HEK293 (cell line): ENCODE measurements at regions of chr9 and their contacts with region 1.

Region 1: DNA sequence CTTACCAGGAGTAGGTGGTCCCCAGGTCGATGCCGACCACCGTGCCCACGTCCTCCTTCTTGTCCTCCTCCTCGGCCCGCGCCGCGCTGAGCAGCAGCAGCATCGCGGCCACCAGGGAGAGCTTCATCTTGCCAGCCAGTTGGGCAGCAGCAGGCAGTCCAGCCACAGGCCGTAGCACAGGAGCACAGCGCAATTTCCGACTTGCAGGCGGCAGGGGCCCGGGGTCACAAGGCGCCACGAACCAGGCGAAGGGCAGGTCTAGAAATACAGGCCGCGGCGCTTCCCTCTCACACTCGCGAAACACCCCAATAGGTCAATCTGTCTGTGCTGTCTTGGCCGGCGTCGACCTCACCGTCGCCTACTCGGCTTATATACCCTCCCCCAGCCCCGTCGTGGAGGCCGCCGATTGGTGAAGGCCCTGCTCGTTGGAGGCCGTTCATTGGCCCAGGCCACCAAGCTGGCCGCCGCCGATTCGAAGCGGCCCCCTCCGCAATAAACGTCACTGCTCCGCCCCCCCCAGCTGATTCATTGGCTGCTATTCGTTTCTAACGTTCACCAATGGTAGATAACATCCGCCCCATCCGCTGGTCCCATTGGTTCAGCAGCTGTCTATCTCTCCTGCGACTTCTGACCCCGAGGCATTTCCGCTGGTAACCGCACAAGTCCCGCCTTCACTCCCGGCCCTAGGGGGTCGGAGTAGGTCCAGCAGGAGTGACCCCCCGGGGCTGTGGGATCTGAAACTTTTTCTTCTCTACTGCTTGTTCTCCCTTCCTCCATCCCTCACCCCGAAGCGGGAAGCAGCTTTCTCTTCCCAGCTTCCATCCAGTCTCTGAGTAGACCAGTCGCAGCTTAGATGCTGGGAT is at the start of gene HSPA5:
- H3K4me3 ChIP-seq: peak within 1 kb of the TSS; percentile 66
- H3K27ac ChIP-seq: peak within 1 kb of the TSS; percentile 81
- H3K4me1 ChIP-seq: no peaks in the 10 kb centered on the region
- CTCF ChIP-seq: peak; percentile 74; the same call in 1 of the 2 replicates

Region 2: DNA sequence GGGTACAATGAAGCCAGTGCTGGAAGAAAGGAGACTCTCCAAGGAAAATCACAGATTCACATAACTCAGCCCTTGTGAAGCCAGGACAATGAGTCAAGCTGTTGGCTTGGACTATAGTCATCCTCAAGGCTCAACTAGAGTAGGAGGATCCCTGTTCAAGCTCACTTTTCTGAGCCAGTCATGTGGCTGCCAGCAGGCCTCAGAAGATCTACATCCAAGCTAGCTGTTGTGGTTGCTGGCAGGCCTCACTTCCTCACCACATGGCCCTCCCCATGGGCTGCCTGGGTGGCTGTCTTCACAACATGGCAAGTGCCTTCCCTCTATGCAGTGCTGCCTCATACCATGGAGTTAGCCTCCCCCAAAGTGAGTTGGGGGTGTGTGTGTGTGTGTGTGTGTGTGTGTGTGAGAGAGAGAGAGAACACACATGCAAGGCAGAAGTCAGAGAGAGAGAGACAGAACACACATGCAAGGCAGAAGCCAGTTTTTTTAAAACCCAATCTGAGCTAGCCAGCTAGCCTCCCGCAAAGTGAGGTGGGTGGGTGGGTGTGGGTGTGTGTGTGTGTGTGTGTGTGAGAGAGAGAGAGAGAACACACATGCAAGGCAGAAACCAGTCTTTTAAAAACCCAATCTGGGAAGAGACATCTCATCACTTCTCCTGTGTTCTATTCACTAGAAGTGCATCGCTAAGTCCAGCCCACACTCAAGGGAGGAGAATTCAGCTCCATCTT is 115.0 kb before region 1 on chr9:
- CTCF ChIA-PET with region 1: no interaction called
- POLR2A ChIA-PET with region 1: no interaction called
- H3K4me3 ChIP-seq: no peak overlapping the region
- H3K27ac ChIP-seq: no peak overlapping the region
- H3K4me1 ChIP-seq: no peaks in the 10 kb centered on the region
- CTCF ChIP-seq: no peak

Region 3: DNA sequence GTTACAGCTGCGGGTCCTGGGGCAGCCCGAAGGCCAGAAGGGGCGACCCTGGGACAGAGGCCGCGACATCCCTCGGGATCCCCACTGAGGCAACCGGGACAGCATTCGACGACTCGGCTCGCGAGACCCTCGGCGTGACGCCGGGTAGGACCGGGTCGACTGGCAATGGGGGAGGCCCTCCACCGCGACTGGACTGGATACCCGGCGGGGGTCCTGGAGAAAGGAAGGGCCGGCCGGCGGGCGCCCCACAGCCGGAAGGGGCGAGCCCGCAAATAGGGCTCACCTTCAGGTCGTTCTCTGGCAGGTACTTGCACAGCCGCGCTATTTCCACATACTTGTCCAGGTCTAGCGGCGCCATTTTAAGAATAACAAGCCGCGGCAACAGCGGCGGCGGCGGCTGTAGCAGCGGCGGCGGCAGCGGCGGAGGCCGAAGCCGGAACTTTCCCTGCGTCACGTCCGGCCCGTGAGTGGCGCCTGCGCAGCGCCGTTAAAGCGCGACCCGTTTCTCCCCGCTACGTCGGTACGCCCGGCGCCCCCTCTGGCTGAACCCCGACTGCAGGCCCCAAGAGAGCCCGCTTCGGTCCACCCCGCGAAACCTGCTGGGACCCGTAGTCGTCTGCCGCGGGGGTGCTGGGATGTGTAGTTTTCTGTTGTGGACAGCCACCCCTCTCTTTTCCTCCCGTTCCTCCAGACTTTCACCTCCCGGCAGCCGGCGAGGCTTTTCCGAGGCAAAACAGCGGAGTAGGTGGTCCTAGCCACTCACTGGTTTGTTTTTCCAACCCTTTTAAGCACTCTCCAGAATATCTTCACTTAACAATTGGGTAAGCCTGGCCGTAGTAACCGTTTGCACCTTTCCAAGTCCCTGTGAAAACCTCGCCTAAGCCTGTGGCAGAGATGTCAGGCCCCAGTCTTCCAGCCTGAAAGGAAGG is 51.6 kb before region 1 on chr9 and contains the start of gene PPP6C:
- CTCF ChIA-PET with region 1: no interaction called
- POLR2A ChIA-PET with region 1: interaction called, 22 read pairs
- H3K4me3 ChIP-seq: peak within 1 kb of the TSS; percentile 98
- H3K27ac ChIP-seq: peak within 1 kb of the TSS; percentile 70
- H3K4me1 ChIP-seq: no peaks in the 10 kb centered on the region; the same call in 1 of the 2 replicates
- CTCF ChIP-seq: peak; percentile 92

Region 4: GRCh38 chr9:125218621-125219020 is 22.6 kb before region 1 on chr9:
- CTCF ChIA-PET with region 1: no interaction called
- POLR2A ChIA-PET with region 1: interaction called, 11 read pairs
- H3K4me3 ChIP-seq: no peak overlapping the region
- H3K27ac ChIP-seq: no peak overlapping the region
- H3K4me1 ChIP-seq: no peaks in the 10 kb centered on the region
- CTCF ChIP-seq: no peak

Region 5: GRCh38 chr9:125255781-125256391 is 14.7 kb after region 1 on chr9:
- CTCF ChIA-PET with region 1: interaction called, 14 read pairs
- POLR2A ChIA-PET with region 1: interaction called, 62 read pairs
- H3K4me3 ChIP-seq: no peak overlapping the region
- H3K27ac ChIP-seq: no peak overlapping the region
- H3K4me1 ChIP-seq: no peaks in the 10 kb centered on the region
- CTCF ChIP-seq: peak; percentile 38

Region 6: GRCh38 chr9:125337240-125337639 is 96.0 kb after region 1 on chr9:
- CTCF ChIA-PET with region 1: no interaction called
- POLR2A ChIA-PET with region 1: interaction called, 10 read pairs
- H3K4me3 ChIP-seq: no peak overlapping the region
- H3K27ac ChIP-seq: no peak overlapping the region
- H3K4me1 ChIP-seq: no peaks in the 10 kb centered on the region
- CTCF ChIP-seq: no peak